Activated CD4-positive, alpha-beta T cell treated with anti-CD3 and anti-CD28 coated beads for 36 hours (primary cell): ENCODE measurements at regions of chr18 and their contacts with region 1.

Region 1: DNA sequence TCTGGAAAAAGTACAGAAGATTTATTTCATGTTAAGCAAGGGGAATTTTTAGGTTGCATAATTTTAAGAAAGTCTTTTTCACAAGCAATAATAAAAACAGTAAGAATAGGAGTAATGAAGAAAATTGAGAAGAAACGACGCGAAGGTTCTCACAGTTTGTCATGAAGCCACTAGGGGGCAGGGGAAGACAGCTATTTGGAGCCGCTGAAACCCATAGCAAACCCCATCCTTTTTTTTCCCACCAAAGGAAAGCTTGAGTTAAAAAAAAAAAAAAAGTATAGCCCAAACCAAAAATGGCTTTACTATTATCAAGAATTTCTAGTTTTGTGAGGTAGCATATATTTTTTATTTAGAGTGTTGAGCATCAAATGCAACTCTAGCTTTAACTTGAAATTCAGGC is 300.9 kb downstream of the PHLPP1 start:
- DNase-seq: peak; percentile 64
- ATAC-seq: peak; percentile 64
- H3K4me3 Mint-ChIP-seq: no peak overlapping the region
- H3K27ac Mint-ChIP-seq: no peak overlapping the region
- H3K4me1 Mint-ChIP-seq: no peaks in the 10 kb centered on the region
- H3K27me3 Mint-ChIP-seq: peaks cover 13% of the 10 kb centered on the region

Region 2: GRCh38 chr18:62714671-62715435 is 301.4 kb before region 1 on chr18:
- CTCF ChIA-PET with region 1: no interaction called
- POLR2A ChIA-PET with region 1: no interaction called
- intact Hi-C with region 1: no loop called
- DNase-seq: peak; percentile 95
- ATAC-seq: peak; percentile 81
- H3K4me3 Mint-ChIP-seq: peak overlapping the region; percentile 81
- H3K27ac Mint-ChIP-seq: peak overlapping the region; percentile 69
- H3K4me1 Mint-ChIP-seq: peaks cover 28% of the 10 kb centered on the region
- H3K27me3 Mint-ChIP-seq: no peaks in the 10 kb centered on the region

Region 3: DNA sequence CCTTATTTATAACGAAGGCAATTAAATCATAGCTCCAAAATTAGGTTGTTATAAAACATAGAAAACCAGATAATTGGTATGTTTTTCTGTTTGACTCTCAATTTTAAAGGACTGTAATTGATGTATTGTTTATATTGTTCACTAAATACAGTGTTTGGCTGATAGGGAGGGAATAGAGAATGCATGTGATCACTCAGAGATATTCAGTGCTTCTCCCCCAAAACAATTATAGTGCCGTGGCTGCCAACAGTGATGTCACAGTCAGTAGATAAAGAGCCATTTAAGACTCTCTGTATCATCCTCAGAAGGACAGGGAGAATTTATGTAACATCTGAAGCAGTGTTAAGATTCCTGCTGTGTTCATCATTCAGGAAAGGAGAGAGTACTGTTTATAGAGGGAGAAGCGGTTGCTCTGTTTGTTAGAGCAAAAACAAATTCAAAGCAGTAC is 231.3 kb before region 1 on chr18:
- CTCF ChIA-PET with region 1: no interaction called
- POLR2A ChIA-PET with region 1: no interaction called
- intact Hi-C with region 1: no loop called
- DNase-seq: no peak
- ATAC-seq: peak; percentile 42
- H3K4me3 Mint-ChIP-seq: no peak overlapping the region
- H3K27ac Mint-ChIP-seq: no peak overlapping the region
- H3K4me1 Mint-ChIP-seq: peaks cover 55% of the 10 kb centered on the region
- H3K27me3 Mint-ChIP-seq: peaks cover 3% of the 10 kb centered on the region

Region 4: DNA sequence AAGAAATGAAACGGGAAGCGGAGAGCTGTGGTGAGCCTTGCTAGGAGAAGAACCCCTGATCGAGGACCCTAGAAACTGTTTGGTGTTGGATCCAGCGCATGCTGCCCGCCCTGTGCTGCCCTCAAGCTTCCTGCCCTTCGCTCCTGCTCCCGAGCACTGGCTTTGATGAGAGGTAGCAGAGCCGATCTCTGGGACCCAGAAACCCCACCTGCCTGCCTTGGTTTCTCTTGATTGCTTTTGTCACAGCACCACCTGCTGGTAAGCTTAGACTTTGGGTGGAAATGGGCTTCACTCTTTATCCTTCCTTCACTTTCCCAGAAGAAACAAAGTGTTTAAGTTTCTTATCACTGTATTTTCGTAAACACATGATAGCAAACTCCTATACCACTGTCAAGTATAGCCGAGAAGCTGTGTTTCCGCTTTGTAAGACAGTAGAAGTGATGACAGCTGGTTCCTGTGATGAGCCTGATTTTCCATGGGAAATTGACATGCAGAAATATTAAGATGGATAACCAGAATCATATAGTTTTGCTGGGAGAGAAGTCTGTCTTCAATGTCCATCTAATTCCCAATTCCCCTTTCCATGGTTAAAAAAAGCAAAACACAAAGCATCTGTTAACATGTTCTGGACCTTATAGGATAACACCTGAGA is 33.5 kb before region 1 on chr18:
- CTCF ChIA-PET with region 1: interaction called, 10 read pairs
- POLR2A ChIA-PET with region 1: no interaction called
- intact Hi-C with region 1: no loop called
- DNase-seq: peak; percentile 74
- ATAC-seq: peak; percentile 72
- H3K4me3 Mint-ChIP-seq: no peak overlapping the region
- H3K27ac Mint-ChIP-seq: no peak overlapping the region
- H3K4me1 Mint-ChIP-seq: peaks cover 3% of the 10 kb centered on the region
- H3K27me3 Mint-ChIP-seq: no peaks in the 10 kb centered on the region

Region 5: GRCh38 chr18:63058521-63058920 is 42.3 kb after region 1 on chr18:
- CTCF ChIA-PET with region 1: interaction called, 12 read pairs
- POLR2A ChIA-PET with region 1: no interaction called
- intact Hi-C with region 1: no loop called
- DNase-seq: no peak
- ATAC-seq: no peak
- H3K4me3 Mint-ChIP-seq: no peak overlapping the region
- H3K27ac Mint-ChIP-seq: no peak overlapping the region
- H3K4me1 Mint-ChIP-seq: peaks cover 6% of the 10 kb centered on the region
- H3K27me3 Mint-ChIP-seq: no peaks in the 10 kb centered on the region

Region 6: GRCh38 chr18:63131106-63131958 is 115.1 kb after region 1 on chr18:
- CTCF ChIA-PET with region 1: interaction called, 21 read pairs
- POLR2A ChIA-PET with region 1: no interaction called
- intact Hi-C with region 1: loop called (anchors 2 to 10 kb)
- DNase-seq: peak; percentile 69
- ATAC-seq: peak; percentile 60
- H3K4me3 Mint-ChIP-seq: no peak overlapping the region
- H3K27ac Mint-ChIP-seq: peak overlapping the region; percentile 74
- H3K4me1 Mint-ChIP-seq: peaks cover 29% of the 10 kb centered on the region
- H3K27me3 Mint-ChIP-seq: no peaks in the 10 kb centered on the region

Region 7: DNA sequence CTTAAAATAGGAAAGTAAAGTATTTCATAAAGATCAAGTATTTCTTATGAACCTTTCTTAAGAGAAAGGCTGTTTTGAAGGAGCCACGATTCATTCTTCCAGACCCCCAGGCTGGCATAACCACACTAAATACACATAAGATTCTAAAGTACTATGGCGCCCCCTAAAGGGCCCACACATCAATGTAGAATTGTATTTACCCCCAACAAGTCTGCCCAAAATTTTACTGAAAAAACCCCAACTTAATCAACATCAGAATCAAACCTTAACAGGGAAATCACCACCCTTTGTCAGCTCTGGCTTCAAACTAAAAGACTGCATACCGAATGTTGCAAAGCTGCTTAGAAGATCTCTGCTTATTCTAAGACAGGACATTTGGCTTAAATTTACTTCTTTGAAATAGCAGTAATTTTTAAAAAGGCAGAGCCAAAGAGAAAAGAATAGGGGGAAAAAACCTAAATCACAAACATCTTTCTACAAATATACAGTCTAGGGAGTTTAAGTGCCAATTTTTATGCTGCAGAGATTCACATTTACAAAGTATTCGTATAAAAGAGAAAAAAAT is 323.7 kb after region 1 on chr18:
- CTCF ChIA-PET with region 1: interaction called, 42 read pairs
- POLR2A ChIA-PET with region 1: no interaction called
- intact Hi-C with region 1: loop called (anchors 1 kb)
- DNase-seq: peak; percentile 67
- ATAC-seq: peak; percentile 58
- H3K4me3 Mint-ChIP-seq: no peak overlapping the region
- H3K27ac Mint-ChIP-seq: no peak overlapping the region
- H3K4me1 Mint-ChIP-seq: peaks cover 14% of the 10 kb centered on the region
- H3K27me3 Mint-ChIP-seq: no peaks in the 10 kb centered on the region

Region 8: GRCh38 chr18:63505566-63506335 is 489.5 kb after region 1 on chr18:
- CTCF ChIA-PET with region 1: interaction called, 4 read pairs
- POLR2A ChIA-PET with region 1: no interaction called
- intact Hi-C with region 1: loop called in 1 of 2 experiments (anchors 2 kb)
- DNase-seq: peak; percentile 54
- ATAC-seq: no peak
- H3K4me3 Mint-ChIP-seq: no peak overlapping the region
- H3K27ac Mint-ChIP-seq: no peak overlapping the region
- H3K4me1 Mint-ChIP-seq: no peaks in the 10 kb centered on the region
- H3K27me3 Mint-ChIP-seq: peaks cover 28% of the 10 kb centered on the region